CD4-positive, alpha-beta memory T cell (primary cell): ENCODE measurements at regions of chr1 and their contacts with region 1.

Region 1: DNA sequence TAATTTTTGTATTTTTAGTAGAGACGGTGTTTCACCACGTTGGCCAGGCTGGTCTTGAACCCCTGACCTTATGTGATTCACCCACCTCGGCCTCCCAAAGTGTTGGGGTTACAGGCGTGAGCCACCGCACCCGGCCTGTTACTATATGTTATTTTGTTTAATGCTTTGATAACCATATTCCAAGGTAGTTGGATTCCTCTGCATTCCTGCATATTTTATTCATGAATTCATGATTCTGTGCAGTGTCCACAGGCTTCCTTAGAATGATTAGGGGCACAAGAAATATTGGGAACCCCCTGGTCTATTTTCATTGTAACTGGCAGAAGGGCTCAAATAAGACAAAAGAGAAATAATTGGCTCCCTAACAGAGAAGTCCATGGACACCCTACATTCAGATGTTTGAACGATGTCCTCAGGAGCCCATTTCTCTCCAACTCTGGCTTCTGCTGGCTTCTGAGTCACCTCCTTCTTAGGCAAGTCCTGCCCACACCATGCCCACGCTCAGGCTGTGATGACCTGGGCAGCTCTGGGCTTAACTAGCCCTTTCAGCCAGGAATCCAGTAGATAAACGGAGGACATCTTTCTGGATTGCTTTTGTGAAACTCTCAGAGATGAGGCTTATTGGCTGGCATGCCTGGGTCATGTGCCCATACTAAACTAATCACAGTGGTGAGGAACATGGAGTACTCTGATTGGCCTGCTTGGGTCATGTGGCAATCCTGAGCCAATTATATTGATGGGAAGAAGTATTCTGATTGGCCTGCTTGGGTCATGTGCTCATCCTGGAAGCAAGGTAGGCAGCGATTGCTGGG is 32.6 kb downstream of the TNFRSF8 start:
- DNase-seq: no peak
- H3K4me3 ChIP-seq: no peak overlapping the region
- H3K4me3 Mint-ChIP-seq: no peak overlapping the region
- H3K27ac ChIP-seq: no peak overlapping the region
- H3K27ac Mint-ChIP-seq: no peak overlapping the region
- H3K4me1 ChIP-seq: peaks cover 12% of the 10 kb centered on the region
- H3K4me1 Mint-ChIP-seq: peaks cover 9 to 11% (median 10%) of the 10 kb centered on the region in 4 donors
- H3K27me3 ChIP-seq: no peaks in the 10 kb centered on the region
- H3K27me3 Mint-ChIP-seq: no peaks in the 10 kb centered on the region

Region 2: GRCh38 chr1:12078938-12079861 is 16.5 kb before region 1 on chr1:
- CTCF ChIA-PET with region 1: interaction called, 10 read pairs
- POLR2A ChIA-PET with region 1: no interaction called
- intact Hi-C with region 1: no loop called
- DNase-seq: peak in 4 of 5 donors; percentile 22 to 37 (median 30)
- H3K4me3 ChIP-seq: peak overlapping the region in 1 of 2 donors; percentile 34
- H3K4me3 Mint-ChIP-seq: peak overlapping the region in 7 of 8 donors; percentile 39 to 71 (median 64)
- H3K27ac ChIP-seq: peak overlapping the region; percentile 23
- H3K27ac Mint-ChIP-seq: peak overlapping the region in 4 of 7 donors; percentile 15 to 73 (median 42)
- H3K4me1 ChIP-seq: peaks cover 30% of the 10 kb centered on the region
- H3K4me1 Mint-ChIP-seq: peaks cover 18 to 35% (median 23%) of the 10 kb centered on the region in 4 donors
- H3K27me3 ChIP-seq: no peaks in the 10 kb centered on the region
- H3K27me3 Mint-ChIP-seq: peaks cover 0 to 11% of the 10 kb centered on the region in 2 donors

Region 3: GRCh38 chr1:12424087-12424529 is 328.4 kb after region 1 on chr1:
- CTCF ChIA-PET with region 1: no interaction called
- POLR2A ChIA-PET with region 1: no interaction called
- intact Hi-C with region 1: no loop called
- DNase-seq: no peak
- H3K4me3 ChIP-seq: no peak overlapping the region
- H3K4me3 Mint-ChIP-seq: no peak overlapping the region
- H3K27ac ChIP-seq: no peak overlapping the region
- H3K27ac Mint-ChIP-seq: peak overlapping the region in 4 of 7 donors; percentile 19 to 57 (median 44)
- H3K4me1 ChIP-seq: no peaks in the 10 kb centered on the region
- H3K4me1 Mint-ChIP-seq: peaks cover 4 to 22% (median 9%) of the 10 kb centered on the region in 4 donors
- H3K27me3 ChIP-seq: no peaks in the 10 kb centered on the region
- H3K27me3 Mint-ChIP-seq: no peaks in the 10 kb centered on the region